ENCODE measurements at regions of chr20 and their contacts with region 1.

Region 1: DNA sequence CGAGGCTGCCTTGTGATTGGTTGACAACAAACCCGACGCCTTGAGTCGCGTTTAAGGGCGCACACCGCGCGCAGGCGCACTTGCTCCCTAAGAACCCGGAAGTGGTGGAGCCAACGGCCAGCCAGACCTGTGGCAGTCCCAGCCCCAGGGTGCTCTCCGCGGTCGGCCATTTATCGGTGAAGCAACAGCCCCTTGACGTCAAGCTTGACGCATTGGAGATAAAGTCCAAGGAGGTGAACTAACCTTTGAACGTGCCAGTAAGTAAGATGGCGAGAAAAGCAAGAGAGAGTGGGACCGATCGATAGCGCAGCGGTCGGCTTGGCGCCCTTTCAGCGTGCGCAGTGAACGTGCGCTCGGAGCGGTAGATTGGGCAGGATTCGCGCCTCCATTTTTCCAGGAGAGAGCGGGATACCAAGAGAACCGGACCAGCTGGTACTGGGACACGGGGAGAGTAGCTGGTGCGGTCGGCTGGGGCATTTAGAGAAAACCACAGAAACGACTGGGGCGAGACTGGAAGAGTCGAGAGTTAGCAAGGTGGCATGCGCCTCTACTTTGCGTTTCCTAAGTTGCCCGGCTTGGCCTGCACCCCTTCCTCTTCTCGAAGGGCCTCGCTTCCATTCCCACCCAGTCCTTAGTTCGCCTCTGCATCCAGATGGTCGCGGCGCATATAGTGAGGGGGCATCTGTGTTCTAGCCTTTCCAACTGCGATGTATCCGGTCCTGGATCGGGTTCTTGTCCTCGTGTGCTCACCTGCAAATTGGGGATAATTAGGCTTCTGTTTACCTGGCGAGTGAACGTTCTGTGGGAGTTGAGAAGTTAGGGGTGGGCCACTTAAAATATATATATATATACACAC is at the start of gene CSTF1:
- DNase-seq: peak; percentile 99
- ATAC-seq: peak; percentile 93
- H3K4me3 ChIP-seq: peak within 1 kb of the TSS; percentile 87 to 98
- H3K27ac ChIP-seq: peak within 1 kb of the TSS; percentile 96
- H3K4me1 ChIP-seq: peaks cover 11 to 16% of the 10 kb centered on the region in 2 experiments; a peak in 3 of 4 replicates
- H3K27me3 ChIP-seq: no peaks in the 10 kb centered on the region
- CTCF ChIP-seq: no peak
- POLR2A ChIP-seq: peak; percentile 19
- RAD21 ChIP-seq: no peak
- total RNA-seq, gene CSTF1: 44.5 TPM

Region 2: DNA sequence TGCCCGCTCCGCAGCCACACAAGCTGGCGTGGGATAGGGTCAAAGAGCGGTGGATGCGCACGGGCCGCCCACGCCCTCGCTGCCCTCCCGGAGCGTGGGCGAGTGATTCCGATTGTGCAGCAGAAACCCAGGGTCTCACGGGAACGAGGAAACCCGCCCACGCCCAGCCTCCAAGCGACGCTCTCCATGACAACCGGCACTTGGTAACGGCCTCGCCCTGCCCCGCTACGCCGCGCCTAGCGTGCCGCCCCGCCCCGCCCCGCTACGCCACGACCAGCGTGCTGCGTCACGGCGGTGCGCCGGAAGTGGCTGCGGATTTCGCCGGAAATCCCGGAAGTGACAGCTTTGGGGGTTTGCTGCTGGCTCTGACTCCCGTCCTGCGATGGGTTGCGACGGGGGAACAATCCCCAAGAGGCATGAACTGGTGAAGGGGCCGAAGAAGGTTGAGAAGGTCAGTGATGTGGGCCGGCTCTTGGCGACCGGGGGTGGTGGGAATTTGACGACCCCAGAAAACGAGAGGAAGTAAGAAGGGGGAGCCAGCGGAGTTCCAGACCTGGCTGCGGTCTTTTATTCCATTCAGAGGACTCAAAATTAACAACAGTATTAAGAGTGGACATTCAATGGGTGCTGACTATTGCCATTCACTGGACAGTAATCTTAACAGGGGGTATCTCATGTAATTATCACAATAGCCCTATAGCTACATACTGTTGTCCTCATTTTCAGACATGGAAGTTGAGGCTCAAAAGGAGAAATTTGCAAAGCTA is 76.0 kb after region 1 on chr20 and contains the start of gene RTF2:
- CTCF ChIA-PET with region 1: no interaction called
- POLR2A ChIA-PET with region 1: no interaction called
- RAD21 ChIA-PET with region 1: no interaction called
- intact Hi-C with region 1: loop called (anchors 5 kb)
- DNase-seq: peak; percentile 84
- ATAC-seq: peak; percentile 99
- H3K4me3 ChIP-seq: peak within 1 kb of the TSS; percentile 85 to 99
- H3K27ac ChIP-seq: peak within 1 kb of the TSS; percentile 26
- H3K4me1 ChIP-seq: peaks cover 15 to 22% of the 10 kb centered on the region in 2 experiments; a peak in 3 of 4 replicates
- H3K27me3 ChIP-seq: no peaks in the 10 kb centered on the region
- CTCF ChIP-seq: no peak
- POLR2A ChIP-seq: peak; percentile 67
- RAD21 ChIP-seq: no peak
- total RNA-seq, gene RTF2: 73.8 TPM

Region 3: GRCh38 chr20:57351042-57351783 is 958.7 kb after region 1 on chr20 and contains the start of gene RAE1:
- CTCF ChIA-PET with region 1: no interaction called
- POLR2A ChIA-PET with region 1: no interaction called
- RAD21 ChIA-PET with region 1: no interaction called
- intact Hi-C with region 1: loop called (anchors 5 kb)
- DNase-seq: peak; percentile 89
- ATAC-seq: peak; percentile 86
- H3K4me3 ChIP-seq: peak within 1 kb of the TSS; percentile 65 to 96
- H3K27ac ChIP-seq: peak within 1 kb of the TSS; percentile 84
- H3K4me1 ChIP-seq: peaks cover 9 to 17% of the 10 kb centered on the region in 2 experiments
- H3K27me3 ChIP-seq: no peaks in the 10 kb centered on the region
- CTCF ChIP-seq: no peak
- POLR2A ChIP-seq: peak; percentile 49
- RAD21 ChIP-seq: no peak
- total RNA-seq, gene RAE1: 46.3 TPM

Region 4: GRCh38 chr20:57387945-57388371 is 995.4 kb after region 1 on chr20:
- CTCF ChIA-PET with region 1: no interaction called
- POLR2A ChIA-PET with region 1: no interaction called
- RAD21 ChIA-PET with region 1: no interaction called
- intact Hi-C with region 1: no loop called
- DNase-seq: no peak
- ATAC-seq: no peak
- H3K4me3 ChIP-seq: no peak overlapping the region
- H3K27ac ChIP-seq: no peak overlapping the region
- H3K4me1 ChIP-seq: peaks cover 24 to 36% of the 10 kb centered on the region in 2 experiments
- H3K27me3 ChIP-seq: no peaks in the 10 kb centered on the region
- CTCF ChIP-seq: no peak
- POLR2A ChIP-seq: no peak
- RAD21 ChIP-seq: no peak

Measured in HCT116 (cell line).